Head of caudate nucleus (tissue), 42 donors: ENCODE measurements at regions of chr12 and their contacts with region 1.

Region 1: GRCh38 chr12:113912760-113913329 is 53.3 kb downstream of the RBM19 start:
- DNase-seq: peak; percentile 33 to 91 (median 82)

Region 2: GRCh38 chr12:113462117-113462774 is 450.6 kb before region 1 on chr12:
- intact Hi-C with region 1: loop called (anchors 5 kb)
- DNase-seq: peak; percentile 66 to 92 (median 82)

Region 3: GRCh38 chr12:113647048-113647447 is 265.8 kb before region 1 on chr12:
- intact Hi-C with region 1: loop called (anchors 5 kb)
- DNase-seq: peak in 41 of 42 donors; percentile 28 to 78 (median 54)